A673 (cell line): ENCODE measurements at regions of chr19 and their contacts with region 1.

Region 1: GRCh38 chr19:11293433-11294389 is 2.2 kb upstream of the TSPAN16 start:
- DNase-seq: peak; percentile 95
- H3K4me3 ChIP-seq: peak overlapping the region; percentile 33
- H3K27ac ChIP-seq: peak overlapping the region; percentile 24
- H3K4me1 ChIP-seq: no peaks in the 10 kb centered on the region
- H3K27me3 ChIP-seq: no peaks in the 10 kb centered on the region
- CTCF ChIP-seq: peak; percentile 99

Region 2: DNA sequence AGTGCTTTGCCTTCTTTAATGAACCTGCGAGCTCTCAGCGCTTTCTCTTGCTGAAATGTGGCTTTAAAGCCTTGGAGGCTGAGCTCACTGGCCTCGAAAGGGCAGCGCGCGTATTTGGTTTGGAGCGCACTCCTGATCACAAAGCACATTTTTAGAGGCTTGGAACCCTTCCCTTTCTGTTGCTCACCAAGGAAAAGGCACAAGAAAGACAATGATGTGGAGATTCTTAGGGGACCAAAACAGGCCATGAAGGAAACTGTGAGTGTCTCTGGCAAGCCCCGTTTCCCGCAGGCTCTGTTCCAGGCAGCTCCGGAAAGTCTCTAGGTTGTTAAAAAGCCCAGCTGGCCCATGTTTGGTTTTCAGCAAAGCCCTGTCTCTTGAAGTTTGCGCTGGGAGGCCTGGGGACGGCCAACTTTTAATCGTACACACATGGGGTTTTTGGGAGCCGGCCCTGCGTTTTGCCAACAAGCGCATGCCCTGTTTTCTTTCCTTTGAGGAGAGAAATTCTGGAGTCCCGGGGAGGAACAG is 128.8 kb before region 1 on chr19:
- CTCF ChIA-PET with region 1: interaction called, 13 read pairs
- POLR2A ChIA-PET with region 1: no interaction called
- intact Hi-C with region 1: no loop called
- DNase-seq: no peak
- H3K4me3 ChIP-seq: no peak overlapping the region
- H3K27ac ChIP-seq: peak overlapping the region; percentile 22
- H3K4me1 ChIP-seq: no peaks in the 10 kb centered on the region
- H3K27me3 ChIP-seq: no peaks in the 10 kb centered on the region
- CTCF ChIP-seq: no peak

Region 3: DNA sequence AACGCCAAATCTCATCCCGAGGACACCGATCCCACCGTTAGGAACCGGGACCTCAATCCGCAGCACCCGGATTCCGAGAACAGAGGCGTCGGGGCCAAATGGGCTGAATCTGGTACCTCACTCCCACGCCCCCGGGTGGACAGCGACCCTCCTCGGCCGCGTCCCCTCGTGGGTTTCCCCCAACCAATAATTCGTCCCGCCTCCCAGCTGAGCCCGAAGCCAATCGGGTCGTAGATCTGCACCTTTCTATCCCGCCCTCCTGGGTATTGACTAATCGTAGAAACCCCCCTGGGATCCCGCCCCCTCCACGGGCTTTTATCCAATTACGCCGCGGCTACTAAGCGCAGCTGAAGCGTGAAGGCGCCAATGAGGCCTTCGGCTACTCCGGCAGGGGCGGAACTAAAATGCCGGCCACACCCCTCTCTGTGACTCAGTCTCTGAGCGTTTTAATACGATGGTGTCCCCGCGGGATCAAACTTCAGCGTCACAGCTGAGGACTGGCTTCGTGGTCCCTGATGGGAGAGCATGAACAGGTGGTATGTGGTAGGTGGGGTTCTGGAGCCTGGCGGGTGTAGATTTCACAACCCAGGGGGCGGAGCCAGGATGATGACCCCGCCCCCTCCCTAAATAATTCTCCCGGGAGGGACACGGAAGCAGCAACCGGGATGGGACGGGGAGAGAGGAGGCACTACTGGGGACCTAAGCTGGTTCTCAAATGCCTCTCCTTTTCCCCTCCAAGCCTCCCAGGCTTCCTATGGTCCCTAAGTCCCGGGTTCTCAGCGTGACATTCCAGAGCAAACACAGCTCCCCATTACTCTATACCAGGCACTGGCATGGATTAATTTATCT is 52.6 kb after region 1 on chr19 and contains the starts of genes CCDC159 and TMEM205:
- CTCF ChIA-PET with region 1: interaction called, 18 read pairs
- POLR2A ChIA-PET with region 1: no interaction called
- intact Hi-C with region 1: no loop called
- DNase-seq: peak; percentile 100
- H3K4me3 ChIP-seq: peak within 1 kb of the TSS; percentile 69
- H3K27ac ChIP-seq: peak within 1 kb of the TSS; percentile 67
- H3K4me1 ChIP-seq: peaks cover 14% of the 10 kb centered on the region
- H3K27me3 ChIP-seq: no peaks in the 10 kb centered on the region
- CTCF ChIP-seq: 0 out of 2 replicates have a peak, but pooled peaks have one; percentile 34
- total RNA-seq, gene CCDC159: 7.9 and 11.6 TPM in 2 replicates
- total RNA-seq, gene TMEM205: 94.3 and 100 TPM in 2 replicates

Region 4: GRCh38 chr19:11446652-11447301 is 153.1 kb after region 1 on chr19:
- CTCF ChIA-PET with region 1: interaction called, 8 read pairs
- POLR2A ChIA-PET with region 1: no interaction called
- intact Hi-C with region 1: loop called (anchors 10 kb)
- DNase-seq: peak; percentile 60
- H3K4me3 ChIP-seq: no peak overlapping the region
- H3K27ac ChIP-seq: no peak overlapping the region
- H3K4me1 ChIP-seq: peaks cover 6% of the 10 kb centered on the region
- H3K27me3 ChIP-seq: no peaks in the 10 kb centered on the region
- CTCF ChIP-seq: peak; percentile 81

Region 5: GRCh38 chr19:11587302-11587974 is 293.7 kb after region 1 on chr19:
- CTCF ChIA-PET with region 1: no interaction called
- POLR2A ChIA-PET with region 1: no interaction called
- intact Hi-C with region 1: loop called (anchors 10 kb)
- DNase-seq: peak; percentile 89
- H3K4me3 ChIP-seq: no peak overlapping the region
- H3K27ac ChIP-seq: no peak overlapping the region
- H3K4me1 ChIP-seq: no peaks in the 10 kb centered on the region
- H3K27me3 ChIP-seq: no peaks in the 10 kb centered on the region
- CTCF ChIP-seq: peak; percentile 92